ENCODE measurements at regions of chr9 and their contacts with region 1.

Region 1: DNA sequence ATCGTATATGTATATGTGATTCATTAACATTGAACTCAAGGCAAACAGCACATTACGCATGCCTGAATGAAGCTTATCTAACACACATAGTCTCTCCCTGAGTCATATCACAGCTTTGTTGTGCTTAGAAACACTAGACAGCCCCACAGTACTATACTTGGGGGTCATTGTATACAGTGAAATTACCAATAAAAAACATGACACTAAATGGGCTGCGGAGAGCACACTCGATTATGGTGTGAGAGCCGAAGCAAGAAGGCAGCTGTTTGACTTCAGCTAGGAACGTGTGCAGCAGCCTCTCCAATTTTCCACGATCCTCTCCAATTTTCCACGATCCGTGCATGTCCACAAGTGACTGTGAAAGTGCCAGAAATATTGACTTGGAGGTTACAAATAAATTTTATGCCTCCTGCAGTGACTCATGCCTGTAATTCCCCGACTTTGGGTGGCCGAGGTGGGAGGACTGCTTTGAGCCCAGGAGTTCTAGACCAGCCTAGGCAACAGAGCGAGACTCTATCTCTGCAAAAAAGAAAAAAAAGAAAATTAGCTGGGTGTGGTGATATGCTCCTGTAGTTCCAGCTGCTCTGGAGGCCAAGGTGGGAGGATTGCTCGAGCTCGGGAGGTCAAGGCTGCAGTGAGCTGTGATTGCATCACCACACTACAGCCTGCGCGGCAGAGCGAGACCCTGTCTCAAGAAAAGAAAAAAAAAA is 102.4 kb downstream of the DAPK1 start:
- DNase-seq: peak in 1 of 5 donors; percentile 25
- ATAC-seq: peak; percentile 11 to 66 (median 56)
- H3K4me3 ChIP-seq: no peak overlapping the region
- H3K27ac ChIP-seq: peak overlapping the region in 2 of 12 donors; percentile 72
- H3K4me1 ChIP-seq: peaks cover 0 to 52% (median 11%) of the 10 kb centered on the region in 12 donors
- H3K27me3 ChIP-seq: no peaks in the 10 kb centered on the region
- CTCF ChIP-seq: no peak
- POLR2A ChIP-seq: no peak

Region 2: GRCh38 chr9:87547667-87548066 is 52.4 kb before region 1 on chr9:
- intact Hi-C with region 1: loop called in 1 of 10 experiments (anchors 10 kb)
- DNase-seq: no peak
- ATAC-seq: no peak
- H3K4me3 ChIP-seq: no peak overlapping the region
- H3K27ac ChIP-seq: peak overlapping the region in 1 of 12 donors; percentile 47
- H3K4me1 ChIP-seq: peaks cover 0 to under 1% (median 0%) of the 10 kb centered on the region in 12 donors
- H3K27me3 ChIP-seq: no peaks in the 10 kb centered on the region
- CTCF ChIP-seq: no peak
- POLR2A ChIP-seq: no peak

Region 3: GRCh38 chr9:87640385-87640795 is 40.3 kb after region 1 on chr9:
- intact Hi-C with region 1: loop called in 1 of 10 experiments (anchors 5 kb)
- DNase-seq: no peak
- ATAC-seq: peak in 2 of 4 donors; percentile 57 to 68
- H3K4me3 ChIP-seq: no peak overlapping the region
- H3K27ac ChIP-seq: peak overlapping the region in 1 of 12 donors; percentile 44
- H3K4me1 ChIP-seq: peaks cover 0 to 12% (median 0%) of the 10 kb centered on the region in 12 donors
- H3K27me3 ChIP-seq: no peaks in the 10 kb centered on the region
- CTCF ChIP-seq: no peak
- POLR2A ChIP-seq: no peak